A673 (cell line): ENCODE measurements at regions of chr4 and their contacts with region 1.

Region 1: GRCh38 chr4:147029296-147029695 is 83.6 kb upstream of the TTC29 start:
- DNase-seq: no peak
- H3K4me3 ChIP-seq: no peak overlapping the region
- H3K27ac ChIP-seq: no peak overlapping the region
- H3K4me1 ChIP-seq: no peaks in the 10 kb centered on the region
- H3K27me3 ChIP-seq: no peaks in the 10 kb centered on the region
- CTCF ChIP-seq: no peak

Region 2: DNA sequence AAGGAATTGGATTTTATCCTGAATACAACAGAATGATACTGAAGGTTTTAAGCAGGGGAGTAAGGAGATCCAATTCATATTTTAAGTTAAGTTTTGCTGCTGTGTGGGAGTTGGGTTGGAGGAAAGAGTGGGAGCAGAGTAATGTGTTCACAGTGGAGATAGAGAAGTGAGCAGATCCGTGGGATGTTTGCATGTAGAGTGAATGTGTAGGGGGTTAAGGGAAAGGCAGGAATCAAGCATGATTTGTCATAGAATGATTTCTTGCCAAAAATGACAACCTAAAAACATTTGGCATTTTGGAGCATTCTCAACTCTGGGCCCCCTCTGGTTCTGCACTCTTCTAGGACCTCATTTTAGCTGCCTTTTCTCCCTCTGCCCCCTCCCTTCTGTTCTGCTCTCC is 779.2 kb after region 1 on chr4:
- CTCF ChIA-PET with region 1: no interaction called
- POLR2A ChIA-PET with region 1: interaction called, 12 read pairs
- intact Hi-C with region 1: no loop called
- DNase-seq: no peak
- H3K4me3 ChIP-seq: no peak overlapping the region
- H3K27ac ChIP-seq: no peak overlapping the region
- H3K4me1 ChIP-seq: no peaks in the 10 kb centered on the region
- H3K27me3 ChIP-seq: no peaks in the 10 kb centered on the region
- CTCF ChIP-seq: no peak